Breast epithelium (tissue), 4 donors: ENCODE measurements at regions of chr20 and their contacts with region 1.

Region 1: GRCh38 chr20:53216856-53217576 is 244.9 kb downstream of the TSHZ2 start:
- DNase-seq: peak; percentile 58 to 79
- H3K4me3 ChIP-seq: peak overlapping the region; percentile 5 to 60 (median 36)
- H3K27ac ChIP-seq: peak overlapping the region; percentile 30 to 34
- H3K4me1 ChIP-seq: no peaks in the 10 kb centered on the region
- H3K27me3 ChIP-seq: no peaks in the 10 kb centered on the region
- CTCF ChIP-seq: peak; percentile 56 to 89 (median 83)
- POLR2A ChIP-seq: no peak

Region 2: DNA sequence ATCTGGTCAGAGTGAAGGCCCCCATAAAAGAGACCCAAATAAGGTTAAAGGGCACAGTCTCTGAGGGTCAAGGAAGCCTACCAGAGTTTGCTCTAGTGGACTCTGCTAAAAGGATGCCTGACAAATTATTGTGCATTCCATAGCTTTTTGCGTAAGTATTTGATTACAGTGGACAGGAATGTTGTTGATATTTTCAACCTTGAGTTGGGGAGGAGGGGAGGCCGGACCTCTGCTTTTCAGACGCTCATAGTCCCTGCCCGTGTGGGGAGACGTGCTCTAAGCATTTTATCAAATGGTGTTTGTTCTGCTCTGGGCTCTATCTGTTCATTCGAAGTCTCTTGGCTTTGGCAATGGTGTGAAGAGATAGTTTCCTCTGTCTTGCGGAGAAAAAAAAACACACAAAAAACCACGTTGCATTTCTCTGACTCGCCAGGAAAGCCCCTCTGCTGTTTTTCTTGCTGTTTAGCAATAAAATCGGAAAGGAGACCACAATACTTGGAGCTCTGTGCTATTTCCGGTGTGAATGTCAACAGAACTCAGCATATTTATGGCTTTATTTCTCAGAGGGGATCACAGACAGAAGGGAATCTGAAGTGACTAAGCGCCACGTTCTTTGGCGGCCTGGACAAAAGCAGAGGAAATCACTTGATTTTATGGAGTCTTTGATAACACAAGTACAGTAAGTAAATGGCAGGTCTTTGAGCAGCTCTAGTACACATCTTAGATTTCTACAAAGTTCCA is 1185.3 kb before region 1 on chr20:
- intact Hi-C with region 1: no loop called
- DNase-seq: no peak
- H3K4me3 ChIP-seq: no peak overlapping the region
- H3K27ac ChIP-seq: peak overlapping the region in 1 of 2 donors; percentile 38
- H3K4me1 ChIP-seq: no peaks in the 10 kb centered on the region
- H3K27me3 ChIP-seq: no peaks in the 10 kb centered on the region
- CTCF ChIP-seq: no peak
- POLR2A ChIP-seq: no peak

Region 3: DNA sequence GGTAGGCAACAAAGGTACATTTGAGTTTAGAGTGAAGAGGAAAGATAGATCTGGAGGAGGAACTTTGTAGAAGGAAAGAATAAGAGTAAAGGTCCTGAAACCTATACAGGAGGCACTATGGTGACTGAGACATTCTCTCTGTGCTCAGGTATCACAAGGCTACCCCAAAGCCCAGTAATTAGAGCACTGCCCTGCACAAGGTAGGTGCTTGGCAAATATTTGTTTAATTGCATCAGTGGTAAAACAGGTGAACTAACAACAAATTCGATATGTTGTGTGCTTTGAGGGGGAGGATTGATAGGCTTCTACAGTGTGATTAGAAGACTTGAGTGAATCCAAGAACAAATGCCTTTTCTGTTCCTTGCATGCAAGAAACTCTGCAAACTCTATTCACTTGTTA is 251.6 kb before region 1 on chr20:
- intact Hi-C with region 1: loop called (anchors 10 kb)
- DNase-seq: no peak
- H3K4me3 ChIP-seq: no peak overlapping the region
- H3K27ac ChIP-seq: no peak overlapping the region
- H3K4me1 ChIP-seq: no peaks in the 10 kb centered on the region
- H3K27me3 ChIP-seq: no peaks in the 10 kb centered on the region
- CTCF ChIP-seq: no peak
- POLR2A ChIP-seq: no peak